ENCODE measurements at regions of chr1 and their contacts with region 1.

Region 1: GRCh38 chr1:84143796-84144565 is at the start of gene PRKACB:
- DNase-seq: peak in 5 of 10 donors; percentile 18 to 74 (median 65)
- ATAC-seq: peak; percentile 91 to 93
- H3K4me3 Mint-ChIP-seq: peak within 1 kb of the TSS; percentile 90 to 99 (median 96)
- H3K27ac Mint-ChIP-seq: peak within 1 kb of the TSS; percentile 95 to 100 (median 97)
- H3K4me1 Mint-ChIP-seq: peaks cover 13 to 59% (median 32%) of the 10 kb centered on the region in 4 donors
- H3K27me3 Mint-ChIP-seq: no peaks in the 10 kb centered on the region
- polyA plus RNA-seq, gene PRKACB: 120 to 162 (median 131) TPM

Region 2: DNA sequence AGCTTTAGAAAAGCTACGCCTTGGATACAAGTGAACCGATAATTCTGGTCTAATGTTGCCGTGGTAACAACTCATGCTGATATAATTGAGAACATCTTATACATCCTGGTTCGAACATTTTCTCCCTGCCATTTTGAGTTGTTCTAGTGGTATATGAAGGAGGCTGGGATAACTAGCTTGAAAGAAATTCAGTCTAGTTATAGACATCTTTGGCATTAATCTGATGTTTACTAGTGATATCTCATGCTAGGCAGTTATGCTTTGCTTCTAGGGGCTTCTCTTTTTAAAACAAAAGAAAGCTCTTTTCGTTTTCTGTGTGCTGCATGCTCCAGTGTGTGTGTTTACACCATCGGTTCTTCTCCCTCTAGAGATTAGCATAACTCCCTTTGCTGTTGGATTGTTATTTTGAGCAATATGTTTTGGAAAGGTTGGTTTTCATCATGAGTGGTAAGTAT is 20.6 kb after region 1 on chr1:
- POLR2A ChIA-PET with region 1: interaction called, 14 read pairs
- DNase-seq: no peak
- ATAC-seq: peak; percentile 46 to 69
- H3K4me3 Mint-ChIP-seq: peak overlapping the region; percentile 7 to 72 (median 56)
- H3K27ac Mint-ChIP-seq: peak overlapping the region in 9 of 10 donors; percentile 9 to 81 (median 63)
- H3K4me1 Mint-ChIP-seq: peaks cover 38 to 86% (median 75%) of the 10 kb centered on the region in 4 donors
- H3K27me3 Mint-ChIP-seq: no peaks in the 10 kb centered on the region

Region 3: DNA sequence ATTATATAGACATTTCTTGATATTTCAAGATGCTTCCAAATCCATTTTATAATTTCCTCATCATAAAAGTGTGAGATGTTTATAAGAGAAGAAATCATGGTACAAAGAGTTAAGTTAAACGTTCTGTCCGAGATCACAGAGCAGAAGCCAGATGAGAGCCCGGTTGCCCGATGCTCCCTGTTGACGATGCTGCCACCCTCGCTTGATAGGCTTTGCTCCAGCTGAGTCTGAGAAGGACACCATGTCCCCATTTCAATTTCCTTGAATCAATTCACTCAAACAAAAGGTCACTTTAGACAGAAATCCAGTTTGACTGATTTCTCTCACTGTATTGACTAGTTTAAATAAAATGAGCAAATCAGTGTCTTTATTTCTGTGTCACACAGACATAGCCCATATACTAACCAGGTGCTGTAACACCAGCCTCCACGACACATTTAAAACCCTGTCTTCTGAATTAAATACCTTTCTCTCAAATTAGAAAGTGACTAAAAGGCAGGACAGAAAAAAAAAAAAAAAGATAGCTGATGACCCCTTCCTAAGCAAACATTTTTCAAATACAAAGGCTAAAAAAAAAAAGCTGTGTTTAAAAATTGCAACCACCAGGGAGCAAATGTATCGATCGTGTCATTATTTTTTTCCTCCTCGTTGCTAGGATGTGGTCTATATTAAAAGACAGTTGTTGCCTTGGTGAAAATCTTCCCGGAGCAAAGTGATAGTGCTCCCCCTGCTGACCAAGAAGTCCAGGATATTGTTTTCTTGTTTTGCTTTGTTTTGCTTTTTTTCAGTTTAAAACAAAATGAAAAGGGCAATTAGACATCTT is 289.5 kb after region 1 on chr1:
- POLR2A ChIA-PET with region 1: interaction called, 68 read pairs
- DNase-seq: peak in 9 of 10 donors; percentile 44 to 85 (median 71)
- ATAC-seq: peak; percentile 65 to 83
- H3K4me3 Mint-ChIP-seq: peak overlapping the region; percentile 57 to 85 (median 80)
- H3K27ac Mint-ChIP-seq: no peak overlapping the region
- H3K4me1 Mint-ChIP-seq: peaks cover 0 to 9% (median 4%) of the 10 kb centered on the region in 4 donors
- H3K27me3 Mint-ChIP-seq: no peaks in the 10 kb centered on the region

Region 4: DNA sequence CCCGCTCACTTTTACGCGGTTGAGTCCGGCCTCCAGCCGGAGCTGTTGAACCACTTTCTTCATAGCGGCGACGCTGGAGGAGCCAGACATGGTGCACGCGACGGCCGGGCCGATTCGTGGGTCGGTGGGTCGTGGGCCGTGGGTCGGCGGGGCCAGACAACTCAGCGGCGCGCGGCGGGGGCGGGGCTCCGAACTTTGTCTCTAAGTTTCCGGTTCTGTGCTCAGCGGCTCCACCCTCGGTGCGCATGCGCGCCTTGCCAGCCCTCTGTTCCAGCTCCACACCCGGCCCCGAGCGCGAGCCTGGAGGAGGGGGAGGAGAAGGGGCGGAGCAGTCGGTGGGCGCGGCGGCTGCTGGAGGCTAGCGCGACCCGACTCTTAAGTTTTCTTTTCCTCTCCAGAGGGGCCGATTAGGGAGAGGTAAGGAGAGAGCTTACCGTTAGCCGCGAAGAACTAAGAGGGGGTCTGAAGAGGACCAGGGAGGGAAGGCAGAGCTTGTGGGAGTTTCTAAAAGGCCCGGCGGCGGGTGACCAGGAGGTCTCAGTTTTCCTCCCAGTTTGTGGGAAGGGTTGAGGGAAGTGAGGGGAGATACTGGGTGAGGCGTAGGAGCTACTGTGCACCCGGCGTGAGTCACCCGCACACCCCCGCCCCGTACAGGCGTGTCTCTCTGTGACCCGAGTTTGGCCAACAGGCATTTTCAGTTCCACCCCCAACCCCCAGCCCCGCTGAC is 362.2 kb after region 1 on chr1 and contains the starts of genes GNG5 and SPATA1:
- POLR2A ChIA-PET with region 1: interaction called, 14 read pairs
- DNase-seq: peak; percentile 92 to 98 (median 96)
- ATAC-seq: peak; percentile 89
- H3K4me3 Mint-ChIP-seq: peak within 1 kb of the TSS; percentile 87 to 100 (median 98)
- H3K27ac Mint-ChIP-seq: peak within 1 kb of the TSS; percentile 93 to 99 (median 97)
- H3K4me1 Mint-ChIP-seq: peaks cover 19 to 56% (median 40%) of the 10 kb centered on the region in 4 donors
- H3K27me3 Mint-ChIP-seq: no peaks in the 10 kb centered on the region
- polyA plus RNA-seq, gene GNG5: 214 to 259 (median 233) TPM
- polyA plus RNA-seq, gene SPATA1: not detected